Activated T-helper 2 cell treated with anti-CD3 and anti-CD28 coated beads, Interferon-gamma antibody, Interleukin-2, Interleukin-4, amounts not matched to agents 10 μg/mL and 5 μg/mL and 100 μg/mL, durations not matched to agents 14 hours and 24 hours and 36 hours (primary cell): ENCODE measurements at regions of chr13 and their contacts with region 1.

Region 1: DNA sequence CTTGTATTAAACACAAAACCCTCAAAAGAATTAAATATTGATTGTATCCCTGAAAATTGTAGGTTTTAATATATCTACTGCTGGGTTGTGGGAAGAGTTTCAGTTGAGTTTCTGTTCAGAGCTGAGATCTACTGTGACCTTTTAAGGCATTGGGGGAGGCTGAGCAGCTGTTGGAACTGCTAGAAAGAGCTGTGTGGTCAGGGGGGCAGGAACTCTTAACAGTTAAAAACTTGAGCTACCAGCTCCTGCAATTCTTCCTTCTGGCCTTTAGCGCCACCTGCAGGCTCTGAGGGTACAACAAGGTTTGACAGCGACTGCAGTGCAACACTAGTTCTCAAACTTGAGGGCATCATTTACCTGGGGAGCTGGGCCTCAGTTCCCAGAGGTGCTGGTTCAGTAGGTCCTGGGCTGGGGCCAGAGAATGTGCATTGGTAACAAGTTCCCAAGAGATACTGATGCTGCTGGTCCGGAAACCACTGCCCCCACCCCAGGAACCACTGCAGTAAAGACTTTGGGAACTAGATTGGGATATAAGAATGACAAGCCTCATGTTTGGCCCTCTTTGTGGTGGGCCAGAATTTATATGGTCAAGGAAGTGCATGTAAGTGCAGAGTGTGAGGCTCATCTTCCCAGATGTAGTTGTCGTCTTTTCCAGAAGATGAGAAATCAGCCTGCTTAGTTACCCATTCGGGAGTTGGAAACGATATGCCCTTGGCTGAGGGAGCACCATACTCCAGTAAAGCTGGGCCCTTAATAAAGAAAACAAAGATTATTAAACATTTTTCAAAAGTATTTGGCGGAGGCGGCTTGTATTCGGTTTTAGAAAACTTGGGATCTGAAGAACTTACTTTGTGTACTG is 2.6 kb downstream of the RNASEH2B start:
- DNase-seq: peak; percentile 88
- H3K4me3 Mint-ChIP-seq: peak overlapping the region; percentile 93
- H3K27ac Mint-ChIP-seq: peak overlapping the region; percentile 89
- H3K4me1 Mint-ChIP-seq: peaks cover 63% of the 10 kb centered on the region
- H3K27me3 Mint-ChIP-seq: no peaks in the 10 kb centered on the region

Region 2: DNA sequence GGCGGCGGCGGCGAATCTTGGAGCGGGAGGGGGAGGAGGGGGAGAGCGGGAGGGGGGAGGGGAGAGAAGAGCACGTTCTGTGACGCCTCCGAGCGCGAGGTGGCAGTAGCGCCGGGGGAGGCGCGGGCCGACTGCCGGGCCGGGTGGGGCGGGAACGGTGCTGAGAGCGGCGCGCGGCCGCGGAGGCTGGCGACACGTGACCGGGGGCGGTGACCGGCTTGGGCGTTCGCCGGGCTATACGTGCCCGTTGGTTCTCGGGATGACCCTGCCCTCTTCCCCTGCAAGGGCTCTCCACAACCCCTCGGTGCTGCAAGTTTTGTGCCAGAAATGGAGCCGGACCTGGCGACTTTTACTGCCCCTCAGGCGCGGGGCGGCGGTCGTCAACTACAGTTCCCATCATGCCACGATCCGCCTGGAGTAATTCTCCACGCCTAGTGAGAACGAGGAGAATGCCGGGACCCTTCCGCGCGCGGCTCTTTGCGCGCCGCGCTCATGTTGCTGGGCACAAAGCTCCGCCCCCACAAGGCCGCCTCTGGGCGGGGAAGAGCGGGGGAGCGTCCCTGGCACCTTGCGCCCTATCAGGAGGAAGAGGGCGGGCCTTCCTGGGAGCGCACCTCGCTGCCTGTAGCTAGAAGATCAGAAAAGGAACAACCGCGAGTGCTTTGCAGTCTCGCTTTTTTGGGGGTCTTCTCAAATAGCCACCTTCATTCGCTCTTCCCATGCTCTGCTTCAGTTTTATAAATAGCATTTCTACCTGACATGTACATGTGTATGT is 1119.4 kb before region 1 on chr13 and contains the start of gene KPNA3:
- intact Hi-C with region 1: loop called (anchors 10 kb)
- DNase-seq: peak; percentile 93
- H3K4me3 Mint-ChIP-seq: peak within 1 kb of the TSS; percentile 92
- H3K27ac Mint-ChIP-seq: peak within 1 kb of the TSS; percentile 97
- H3K4me1 Mint-ChIP-seq: peaks cover 29% of the 10 kb centered on the region
- H3K27me3 Mint-ChIP-seq: peaks cover 4% of the 10 kb centered on the region
- total RNA-seq, gene KPNA3: 46.1 and 49.0 TPM in 2 replicates

Region 3: GRCh38 chr13:49996951-49997895 is 914.9 kb before region 1 on chr13 and contains the start of gene TRIM13:
- intact Hi-C with region 1: loop called (anchors 1 kb)
- DNase-seq: peak; percentile 79
- H3K4me3 Mint-ChIP-seq: peak within 1 kb of the TSS; percentile 85
- H3K27ac Mint-ChIP-seq: peak within 1 kb of the TSS; percentile 89
- H3K4me1 Mint-ChIP-seq: peaks cover 31% of the 10 kb centered on the region
- H3K27me3 Mint-ChIP-seq: no peaks in the 10 kb centered on the region
- total RNA-seq, gene TRIM13: 17.2 and 17.9 TPM in 2 replicates

Region 4: GRCh38 chr13:50130123-50130946 is 781.8 kb before region 1 on chr13:
- intact Hi-C with region 1: loop called (anchors 2 kb)
- DNase-seq: no peak
- H3K4me3 Mint-ChIP-seq: peak overlapping the region; percentile 68
- H3K27ac Mint-ChIP-seq: peak overlapping the region; percentile 17
- H3K4me1 Mint-ChIP-seq: peaks cover 40% of the 10 kb centered on the region
- H3K27me3 Mint-ChIP-seq: peaks cover 69% of the 10 kb centered on the region

Region 5: DNA sequence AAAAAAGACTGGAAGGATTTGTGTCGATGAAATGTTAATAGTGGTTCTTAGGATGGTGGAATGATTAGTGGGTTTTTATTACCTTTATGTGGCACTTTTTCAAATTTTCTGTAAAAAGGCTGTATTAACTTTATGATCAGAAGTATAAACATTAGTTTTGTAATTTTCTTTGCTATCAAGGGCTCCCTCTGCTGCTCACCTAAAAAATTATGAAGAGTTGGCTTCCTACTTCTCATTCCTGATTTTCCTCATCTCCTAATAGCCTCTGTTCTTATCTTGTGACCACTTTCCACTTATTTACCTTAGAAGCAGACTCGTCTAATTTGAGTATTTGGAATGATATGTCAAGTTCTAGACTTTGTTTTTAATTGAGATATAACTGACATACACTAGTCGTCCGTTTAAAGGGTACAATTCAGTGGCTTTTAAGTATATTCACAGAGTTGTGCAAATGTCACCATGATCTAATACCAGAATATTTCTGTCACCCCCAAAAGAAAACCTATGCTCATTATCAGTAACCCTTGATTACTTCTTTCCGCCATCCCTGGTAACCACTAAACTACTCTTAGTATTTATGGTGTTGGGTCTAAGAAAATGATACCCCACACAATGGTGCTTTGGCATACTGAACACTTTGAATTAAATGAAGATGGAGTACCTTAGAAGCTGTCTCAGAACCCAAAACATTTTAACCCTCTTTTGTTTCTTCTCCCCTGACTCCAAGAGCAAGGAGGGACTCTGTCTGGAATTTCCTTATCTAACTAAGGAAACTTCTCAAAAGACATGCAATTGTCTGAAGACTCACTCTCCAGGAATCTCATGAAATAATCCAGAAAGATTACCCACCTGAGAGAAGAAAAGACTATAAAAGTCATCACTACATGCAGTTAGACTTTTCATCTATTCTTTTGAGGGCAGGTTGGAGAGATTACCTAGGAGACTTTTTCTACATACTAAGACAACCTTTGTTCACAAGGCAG is 380.0 kb before region 1 on chr13:
- intact Hi-C with region 1: loop called (anchors 2 kb)
- DNase-seq: no peak
- H3K4me3 Mint-ChIP-seq: no peak overlapping the region
- H3K27ac Mint-ChIP-seq: no peak overlapping the region
- H3K4me1 Mint-ChIP-seq: peaks cover 20% of the 10 kb centered on the region
- H3K27me3 Mint-ChIP-seq: peaks cover 43% of the 10 kb centered on the region

Region 6: GRCh38 chr13:50713523-50714248 is 198.5 kb before region 1 on chr13:
- intact Hi-C with region 1: loop called (anchors 10 kb)
- DNase-seq: peak; percentile 11
- H3K4me3 Mint-ChIP-seq: peak overlapping the region; percentile 37
- H3K27ac Mint-ChIP-seq: no peak overlapping the region
- H3K4me1 Mint-ChIP-seq: peaks cover 16% of the 10 kb centered on the region
- H3K27me3 Mint-ChIP-seq: peaks cover 50% of the 10 kb centered on the region

Region 7: GRCh38 chr13:51070005-51070649 is 158.0 kb after region 1 on chr13:
- intact Hi-C with region 1: loop called (anchors 1 kb)
- DNase-seq: peak; percentile 72
- H3K4me3 Mint-ChIP-seq: no peak overlapping the region
- H3K27ac Mint-ChIP-seq: no peak overlapping the region
- H3K4me1 Mint-ChIP-seq: peaks cover 29% of the 10 kb centered on the region
- H3K27me3 Mint-ChIP-seq: peaks cover 16% of the 10 kb centered on the region

Region 8: DNA sequence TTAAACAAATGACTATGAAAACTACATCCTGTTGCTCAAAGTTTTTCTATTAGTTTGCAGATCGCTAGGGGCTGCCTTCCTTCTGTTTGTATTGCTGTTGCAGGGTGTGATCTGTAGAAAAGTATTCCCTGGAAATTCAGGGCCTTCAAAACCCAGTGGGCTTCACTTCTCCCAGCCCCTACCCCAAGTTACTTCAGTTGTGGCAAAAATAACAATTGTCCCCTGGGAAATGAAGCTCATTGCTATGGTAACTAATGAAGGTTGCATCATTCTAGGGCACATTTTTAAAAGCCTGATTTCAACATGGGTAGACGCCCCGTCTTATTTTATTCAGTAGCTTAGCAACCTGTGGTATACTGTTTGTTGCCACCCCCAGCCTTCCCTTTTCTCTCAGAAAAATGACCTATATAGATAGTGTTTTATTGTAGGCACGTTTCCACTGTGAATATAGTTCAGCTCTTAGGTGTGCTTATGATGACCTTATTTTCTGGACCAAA is 733.0 kb after region 1 on chr13:
- intact Hi-C with region 1: no loop called
- DNase-seq: no peak
- H3K4me3 Mint-ChIP-seq: no peak overlapping the region
- H3K27ac Mint-ChIP-seq: peak overlapping the region; percentile 43
- H3K4me1 Mint-ChIP-seq: peaks cover 31% of the 10 kb centered on the region
- H3K27me3 Mint-ChIP-seq: no peaks in the 10 kb centered on the region